Cardiac septum (tissue), 1 donor: ENCODE measurements at regions of chr12 and their contacts with region 1.

Region 1: DNA sequence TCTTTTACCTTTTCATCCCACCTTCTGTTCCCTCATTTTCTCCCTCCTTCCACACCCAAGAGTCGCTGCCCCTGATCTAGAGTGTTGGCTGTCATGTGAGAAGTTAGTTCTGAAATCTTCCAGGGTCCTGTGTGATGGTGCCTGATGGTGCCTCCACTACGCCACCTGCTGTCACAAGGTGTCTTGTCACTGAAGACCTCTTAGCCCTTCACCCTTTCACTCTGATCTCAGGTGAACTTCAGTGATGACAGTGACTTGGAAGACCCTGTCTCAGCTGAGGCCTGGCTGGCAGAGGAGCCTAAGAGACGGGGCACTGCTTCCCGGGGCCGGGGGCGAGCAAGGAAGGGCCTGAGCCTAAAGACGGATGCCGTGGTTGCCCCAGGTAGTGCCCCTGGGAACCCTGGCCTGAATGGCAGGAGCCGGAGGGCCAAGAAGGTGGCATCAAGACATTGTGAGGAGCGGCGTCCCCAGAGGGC is 7.6 kb upstream of the PFDN5 start:
- DNase-seq: peak; percentile 84

Region 2: DNA sequence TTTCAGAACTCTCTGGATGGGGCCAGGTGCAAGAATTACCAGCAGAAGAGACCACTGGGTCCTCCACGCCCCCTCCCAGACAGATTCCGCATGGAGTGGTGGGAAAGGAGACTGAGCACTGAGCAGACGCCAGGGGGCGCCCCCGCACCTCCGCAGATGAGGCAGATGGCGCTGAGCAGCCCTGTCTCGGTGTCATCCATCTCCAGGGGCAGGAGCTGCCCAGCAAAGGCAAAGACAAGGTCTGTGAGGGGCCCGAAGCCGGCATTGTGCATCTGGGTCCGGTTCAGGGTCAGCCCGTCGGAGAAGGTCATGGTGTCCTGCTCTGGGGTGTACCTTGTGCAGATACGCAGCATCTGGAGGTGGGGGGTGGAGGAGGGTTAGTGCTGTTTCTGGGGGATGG is 74.4 kb before region 1 on chr12:
- intact Hi-C with region 1: loop called (anchors 1 kb)
- DNase-seq: peak; percentile 94

Region 3: DNA sequence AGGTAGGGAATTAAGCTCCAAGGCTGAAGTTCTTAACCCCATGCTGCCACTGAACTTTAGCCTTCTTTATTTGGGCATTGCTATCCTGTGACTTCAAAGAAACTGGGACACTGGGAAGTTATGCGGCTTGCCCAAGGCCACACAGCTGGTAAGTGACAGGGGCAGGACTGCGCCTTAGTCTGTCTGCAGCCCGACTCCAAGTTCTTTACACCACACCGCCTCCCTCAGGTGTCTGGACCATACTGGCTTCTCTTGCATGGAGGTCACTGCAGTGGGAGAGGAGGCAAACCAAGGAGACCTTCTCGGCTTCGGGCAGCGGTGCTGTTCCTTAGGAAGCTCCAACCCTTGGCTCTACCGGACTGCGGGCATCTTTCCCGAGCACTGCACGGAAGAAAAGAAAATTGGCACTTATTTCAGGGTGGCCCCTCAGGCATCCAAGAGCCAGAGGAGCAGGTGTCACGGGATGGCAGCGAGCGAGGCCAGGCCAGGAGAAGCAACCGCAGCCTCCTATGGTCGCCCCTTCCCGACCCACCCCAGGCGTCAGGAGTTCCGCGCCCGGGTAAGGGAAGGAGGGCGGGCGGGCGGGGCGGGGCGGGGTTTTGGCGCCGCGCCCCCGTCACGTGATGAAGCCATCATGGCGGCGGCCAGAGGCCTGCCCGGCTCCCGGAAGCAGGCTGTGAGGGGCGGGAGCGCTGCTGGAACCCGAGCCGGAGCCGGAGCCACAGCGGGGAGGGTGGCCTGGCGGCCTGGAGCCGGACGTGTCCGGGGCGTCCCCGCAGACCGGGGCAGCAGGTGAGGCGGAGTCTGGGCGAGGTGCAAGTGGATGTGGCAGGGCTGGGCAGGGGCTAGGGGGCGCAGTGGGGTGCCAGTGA is 36.1 kb before region 1 on chr12:
- intact Hi-C with region 1: loop called (anchors 5 kb)
- DNase-seq: peak; percentile 91